Body of pancreas (tissue), 4 donors: ENCODE measurements at regions of chr15 and their contacts with region 1.

Region 1: DNA sequence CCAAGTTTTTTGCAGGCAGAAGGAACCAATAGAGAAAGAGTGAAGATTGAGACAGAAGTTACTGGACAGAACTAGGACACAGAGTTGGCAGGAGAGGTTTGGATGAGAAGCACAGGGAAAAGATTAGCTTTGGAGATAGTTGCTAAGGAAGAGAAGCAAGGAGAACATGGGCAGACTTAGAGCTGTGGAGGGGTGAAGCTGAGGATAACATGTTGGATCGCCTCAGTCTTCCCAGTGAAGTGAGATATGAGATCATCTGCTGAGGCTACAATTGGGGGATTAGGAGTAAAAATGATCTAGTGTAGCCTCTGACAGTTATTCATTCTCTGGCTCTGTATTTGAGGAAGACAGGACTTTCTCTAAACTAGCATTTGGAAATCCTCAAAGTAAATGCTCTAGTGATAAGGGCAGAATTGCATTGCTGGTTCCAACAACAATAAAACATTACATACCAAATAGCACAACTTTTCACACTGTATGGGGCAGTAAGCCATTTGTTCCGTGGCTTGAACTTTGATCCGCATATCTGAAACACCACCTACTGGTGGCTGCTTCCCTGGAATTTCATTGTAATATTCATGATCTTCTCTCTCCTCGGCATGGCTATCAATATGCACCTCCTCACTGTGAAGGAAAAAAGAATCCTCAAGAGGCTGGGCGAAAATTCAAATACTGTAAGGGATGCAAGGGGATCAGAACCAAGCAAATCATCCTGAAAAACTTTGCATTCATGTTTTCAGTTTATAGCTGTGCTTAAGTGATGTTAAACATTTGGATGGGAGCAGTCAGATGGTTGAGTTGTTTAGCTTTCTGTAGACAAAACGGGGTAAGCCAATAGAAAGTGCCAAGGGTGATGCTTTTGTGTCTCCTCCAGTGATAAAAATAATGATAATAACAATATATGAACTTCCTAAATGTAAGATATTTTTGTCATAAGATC is 22.2 kb upstream of the EID1 start:
- DNase-seq: peak; percentile 17 to 53 (median 34)
- ATAC-seq: peak; percentile 75
- H3K4me3 ChIP-seq: no peak overlapping the region
- H3K27ac ChIP-seq: no peak overlapping the region
- H3K4me1 ChIP-seq: peaks cover 9% of the 10 kb centered on the region
- H3K27me3 ChIP-seq: no peaks in the 10 kb centered on the region
- CTCF ChIP-seq: peak; percentile 30 to 70 (median 52)
- POLR2A ChIP-seq: no peak

Region 2: GRCh38 chr15:48360841-48361240 is 494.9 kb before region 1 on chr15:
- intact Hi-C with region 1: loop called (anchors 10 kb)
- DNase-seq: no peak
- ATAC-seq: no peak
- H3K4me3 ChIP-seq: no peak overlapping the region
- H3K27ac ChIP-seq: no peak overlapping the region
- H3K4me1 ChIP-seq: no peaks in the 10 kb centered on the region
- H3K27me3 ChIP-seq: no peaks in the 10 kb centered on the region
- CTCF ChIP-seq: no peak
- POLR2A ChIP-seq: no peak

Region 3: DNA sequence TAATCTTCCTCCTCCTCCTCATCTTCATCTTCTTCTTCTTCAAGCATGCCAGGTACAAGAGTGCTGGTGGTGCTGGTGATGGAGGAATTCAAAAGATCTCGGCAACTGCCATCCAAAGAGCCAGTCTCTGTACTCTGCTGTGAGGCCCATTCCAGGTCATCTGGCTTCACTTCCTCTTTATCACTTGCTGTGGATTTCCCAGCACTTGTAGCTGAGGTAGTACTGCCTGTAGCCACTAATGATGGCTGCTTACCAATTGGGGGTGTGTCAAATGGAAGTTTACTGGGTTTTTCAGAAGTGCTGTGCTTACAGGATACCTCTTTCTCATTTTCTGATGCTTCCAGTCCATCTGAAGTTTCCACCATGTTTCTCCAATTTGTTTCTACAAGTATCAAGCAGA is 136.8 kb after region 1 on chr15:
- intact Hi-C with region 1: no loop called
- DNase-seq: no peak
- ATAC-seq: no peak
- H3K4me3 ChIP-seq: no peak overlapping the region
- H3K27ac ChIP-seq: no peak overlapping the region
- H3K4me1 ChIP-seq: no peaks in the 10 kb centered on the region
- H3K27me3 ChIP-seq: no peaks in the 10 kb centered on the region
- CTCF ChIP-seq: no peak
- POLR2A ChIP-seq: no peak

Region 4: GRCh38 chr15:49421991-49422390 is 566.2 kb after region 1 on chr15:
- intact Hi-C with region 1: loop called (anchors 10 kb)
- DNase-seq: peak; percentile 37 to 51 (median 45)
- ATAC-seq: peak; percentile 81
- H3K4me3 ChIP-seq: no peak overlapping the region
- H3K27ac ChIP-seq: no peak overlapping the region
- H3K4me1 ChIP-seq: no peaks in the 10 kb centered on the region
- H3K27me3 ChIP-seq: no peaks in the 10 kb centered on the region
- CTCF ChIP-seq: peak; percentile 22 to 100 (median 77)
- POLR2A ChIP-seq: no peak